ENCODE measurements at regions of chr18 and their contacts with region 1.

Region 1: GRCh38 chr18:12934454-12935071 is 13.2 kb upstream of the SEH1L start:
- DNase-seq: peak; percentile 34
- ATAC-seq: peak; percentile 96
- H3K4me3 ChIP-seq: no peak overlapping the region
- H3K27ac ChIP-seq: no peak overlapping the region
- H3K4me1 ChIP-seq: no peaks in the 10 kb centered on the region
- H3K27me3 ChIP-seq: no peaks in the 10 kb centered on the region; a peak in 2 of 4 replicates
- CTCF ChIP-seq: peak; percentile 95 to 99 (median 98); a peak in 5 of 6 replicates
- EP300 ChIP-seq: no peak
- POLR2A ChIP-seq: no peak
- RAD21 ChIP-seq: peak; percentile 100

Region 2: DNA sequence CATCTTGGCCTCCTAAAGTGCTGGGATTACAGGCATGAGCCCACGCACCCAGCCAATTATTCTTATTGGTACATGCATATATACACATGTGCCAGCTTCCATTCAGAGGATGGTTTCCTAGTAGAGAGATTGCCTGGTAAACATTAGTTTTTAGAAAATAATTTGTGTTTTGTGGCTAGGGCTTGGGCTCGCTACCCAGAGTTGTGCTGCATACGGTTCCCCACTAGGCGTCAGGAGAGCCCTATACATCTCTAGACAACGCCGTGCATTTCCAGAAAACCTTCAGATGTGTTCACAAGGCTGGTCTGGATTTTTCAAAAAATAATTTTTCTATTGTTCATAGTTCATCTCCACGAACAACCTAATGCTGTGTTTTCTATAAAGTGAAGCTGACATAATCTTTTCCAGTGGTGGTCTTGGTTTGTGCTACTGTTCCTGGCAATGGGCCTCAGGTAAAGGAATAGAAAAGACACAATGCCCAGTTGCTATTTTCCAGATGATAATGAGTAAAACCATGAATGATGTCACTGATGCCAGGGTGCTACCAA is 542.9 kb before region 1 on chr18:
- CTCF ChIA-PET with region 1: interaction called, 12 read pairs
- POLR2A ChIA-PET with region 1: no interaction called
- RAD21 ChIA-PET with region 1: interaction called, 9 read pairs
- SMC1A ChIA-PET with region 1: no interaction called
- in situ Hi-C with region 1: no loop called
- intact Hi-C with region 1: loop called (anchors 5 kb)
- DNase-seq: no peak
- ATAC-seq: peak; percentile 95
- H3K4me3 ChIP-seq: no peak overlapping the region
- H3K27ac ChIP-seq: no peak overlapping the region
- H3K4me1 ChIP-seq: no peaks in the 10 kb centered on the region
- H3K27me3 ChIP-seq: no peaks in the 10 kb centered on the region
- CTCF ChIP-seq: peak; percentile 95 to 96 (median 95)
- EP300 ChIP-seq: no peak
- POLR2A ChIP-seq: no peak
- RAD21 ChIP-seq: peak; percentile 93

Region 3: GRCh38 chr18:12726774-12727550 is 207.6 kb before region 1 on chr18:
- CTCF ChIA-PET with region 1: interaction called, 70 read pairs
- POLR2A ChIA-PET with region 1: no interaction called
- RAD21 ChIA-PET with region 1: interaction called, 17 read pairs
- SMC1A ChIA-PET with region 1: interaction called, 32 read pairs
- in situ Hi-C with region 1: loop called (anchors 5 kb)
- intact Hi-C with region 1: loop called (anchors 1 kb)
- DNase-seq: no peak
- ATAC-seq: peak; percentile 84
- H3K4me3 ChIP-seq: no peak overlapping the region
- H3K27ac ChIP-seq: no peak overlapping the region
- H3K4me1 ChIP-seq: no peaks in the 10 kb centered on the region
- H3K27me3 ChIP-seq: no peaks in the 10 kb centered on the region
- CTCF ChIP-seq: peak; percentile 82 to 84 (median 83)
- EP300 ChIP-seq: no peak
- POLR2A ChIP-seq: no peak; the same call in 1 of the 2 replicates
- RAD21 ChIP-seq: peak; percentile 84

Region 4: GRCh38 chr18:12744103-12744502 is 190.5 kb before region 1 on chr18:
- CTCF ChIA-PET with region 1: interaction called, 67 read pairs
- POLR2A ChIA-PET with region 1: no interaction called
- RAD21 ChIA-PET with region 1: interaction called, 7 read pairs
- SMC1A ChIA-PET with region 1: interaction called, 21 read pairs
- in situ Hi-C with region 1: no loop called
- intact Hi-C with region 1: loop called (anchors 1 kb)
- DNase-seq: no peak
- ATAC-seq: peak; percentile 77
- H3K4me3 ChIP-seq: no peak overlapping the region
- H3K27ac ChIP-seq: no peak overlapping the region
- H3K4me1 ChIP-seq: no peaks in the 10 kb centered on the region
- H3K27me3 ChIP-seq: no peaks in the 10 kb centered on the region
- CTCF ChIP-seq: peak; percentile 25 to 62 (median 53); a peak in 5 of 6 replicates
- EP300 ChIP-seq: no peak
- POLR2A ChIP-seq: no peak
- RAD21 ChIP-seq: peak; percentile 87

Region 5: GRCh38 chr18:12921178-12921577 is 13.4 kb before region 1 on chr18:
- CTCF ChIA-PET with region 1: interaction called, 8 read pairs
- POLR2A ChIA-PET with region 1: no interaction called
- RAD21 ChIA-PET with region 1: interaction called, 9 read pairs
- SMC1A ChIA-PET with region 1: interaction called, 11 read pairs
- in situ Hi-C with region 1: no loop called
- intact Hi-C with region 1: no loop called
- DNase-seq: peak; percentile 36
- ATAC-seq: peak; percentile 98
- H3K4me3 ChIP-seq: no peak overlapping the region
- H3K27ac ChIP-seq: no peak overlapping the region
- H3K4me1 ChIP-seq: peaks cover 8% of the 10 kb centered on the region
- H3K27me3 ChIP-seq: no peaks in the 10 kb centered on the region; a peak in 3 of 4 replicates
- CTCF ChIP-seq: no peak
- EP300 ChIP-seq: no peak
- POLR2A ChIP-seq: no peak
- RAD21 ChIP-seq: no peak

Measured in GM12878 (cell line).